ENCODE measurements at regions of chrX and their contacts with region 1.

Region 1: DNA sequence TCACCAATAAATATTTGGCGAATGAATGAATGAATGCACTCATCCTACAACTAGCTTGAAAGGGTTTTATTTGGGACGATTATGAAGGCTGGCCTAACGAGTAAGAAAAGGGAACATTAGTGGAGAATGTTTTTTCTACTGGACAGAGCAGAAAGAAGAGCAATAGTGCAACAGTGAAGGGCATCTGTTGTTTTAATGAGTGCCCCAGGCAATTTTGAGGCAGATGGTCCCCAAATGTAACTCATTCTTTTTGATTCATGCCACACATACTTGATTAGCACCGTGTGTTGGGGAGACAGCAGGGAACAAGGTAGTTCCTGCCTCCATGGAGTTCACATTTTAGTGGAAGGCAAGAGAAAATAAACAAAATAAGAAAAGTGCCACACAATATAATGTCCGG is 22.7 kb upstream of the INTS6L start:
- DNase-seq: no peak
- ATAC-seq: no peak
- H3K4me3 ChIP-seq: no peak overlapping the region
- H3K27ac ChIP-seq: no peak overlapping the region
- H3K4me1 ChIP-seq: no peaks in the 10 kb centered on the region
- H3K27me3 ChIP-seq: peaks cover 0 to 14% (median 0%) of the 10 kb centered on the region in 9 donors
- CTCF ChIP-seq: no peak
- POLR2A ChIP-seq: no peak

Region 2: DNA sequence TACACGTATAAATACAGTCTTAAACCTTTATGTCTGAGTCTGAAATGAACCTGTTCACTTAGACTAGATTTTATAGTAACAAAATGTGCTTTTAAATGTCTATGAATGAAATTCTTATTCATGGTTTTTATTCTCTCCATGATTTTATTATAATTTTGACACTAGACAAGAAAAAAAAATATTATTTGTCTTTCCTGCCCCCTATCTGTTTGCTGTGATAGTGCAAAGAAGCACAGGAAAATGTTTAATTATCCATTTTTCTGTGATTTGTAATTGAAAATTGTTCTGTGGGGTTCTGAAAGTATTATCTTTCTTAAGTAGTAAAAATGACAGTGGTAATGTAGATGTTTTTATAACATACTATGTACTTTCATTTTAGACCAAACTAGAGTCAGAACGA is 74.7 kb after region 1 on chrX:
- intact Hi-C with region 1: loop called in 1 of 10 experiments (anchors 10 kb)
- DNase-seq: no peak
- ATAC-seq: no peak
- H3K4me3 ChIP-seq: no peak overlapping the region
- H3K27ac ChIP-seq: no peak overlapping the region
- H3K4me1 ChIP-seq: no peaks in the 10 kb centered on the region
- H3K27me3 ChIP-seq: no peaks in the 10 kb centered on the region
- CTCF ChIP-seq: peak in 11 of 12 donors; percentile 18 to 52 (median 34)
- POLR2A ChIP-seq: no peak

Region 3: DNA sequence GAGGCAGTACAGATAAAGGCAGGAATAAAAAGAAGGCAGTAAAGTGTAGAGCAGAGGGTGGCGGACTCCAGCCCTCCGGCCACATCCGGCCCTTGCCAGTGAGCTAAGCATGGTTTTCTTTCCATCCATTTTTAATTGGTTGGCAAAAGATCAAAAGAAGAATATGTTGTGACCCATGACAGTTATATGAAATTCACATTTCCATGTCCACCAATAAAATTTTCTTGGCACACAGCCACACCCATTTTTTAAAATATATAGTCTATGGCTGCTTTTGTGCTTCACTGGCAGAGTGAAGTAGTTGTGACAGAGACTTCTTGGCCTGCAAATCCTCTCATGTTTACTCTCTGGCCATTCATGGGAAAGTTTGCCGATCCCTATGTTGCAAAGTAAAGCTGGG is 517.3 kb after region 1 on chrX:
- intact Hi-C with region 1: no loop called
- DNase-seq: no peak
- ATAC-seq: no peak
- H3K4me3 ChIP-seq: no peak overlapping the region
- H3K27ac ChIP-seq: no peak overlapping the region
- H3K4me1 ChIP-seq: no peaks in the 10 kb centered on the region
- H3K27me3 ChIP-seq: no peaks in the 10 kb centered on the region
- CTCF ChIP-seq: no peak
- POLR2A ChIP-seq: no peak